Dorsolateral prefrontal cortex (tissue), 120 donors: ENCODE measurements at regions of chr11 and their contacts with region 1.

Region 1: GRCh38 chr11:27698872-27699474 is 1.3 kb downstream of the BDNF start:
- DNase-seq: peak; percentile 54 to 86 (median 68)
- H3K4me3 ChIP-seq: peak overlapping the region; percentile 29 to 77 (median 61)
- H3K27ac ChIP-seq: no peak overlapping the region
- H3K27me3 ChIP-seq: peaks cover 0 to 65% (median 25%) of the 10 kb centered on the region in 45 donors
- CTCF ChIP-seq: peak; percentile 32 to 87 (median 78)

Region 2: DNA sequence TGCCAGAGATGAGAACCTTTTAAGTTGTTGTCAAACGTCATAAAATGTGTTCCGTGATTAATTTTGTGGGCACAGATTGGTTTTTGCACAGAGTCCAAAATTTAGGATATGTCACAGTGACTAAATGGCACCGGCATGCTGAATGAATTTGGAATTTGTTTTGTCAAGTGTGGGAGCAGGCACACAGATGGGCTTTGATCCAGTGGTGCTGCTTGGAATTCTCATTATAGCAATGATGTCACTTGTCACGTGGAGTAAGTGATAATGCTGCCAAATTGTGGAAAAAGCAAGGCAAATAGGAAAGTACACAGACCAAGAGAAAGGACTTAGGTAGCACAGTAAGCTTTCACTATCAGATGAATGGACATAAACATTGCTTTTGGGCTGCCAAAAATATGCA is 184.4 kb before region 1 on chr11:
- intact Hi-C with region 1: loop called in 1 of 2 experiments (anchors 10 kb)
- DNase-seq: peak in 2 of 10 donors; percentile 18 to 41
- H3K4me3 ChIP-seq: no peak overlapping the region
- H3K27ac ChIP-seq: peak overlapping the region in 1 of 59 donors; percentile 49
- H3K27me3 ChIP-seq: no peaks in the 10 kb centered on the region
- CTCF ChIP-seq: no peak

Region 3: GRCh38 chr11:27532652-27533325 is 166.2 kb before region 1 on chr11:
- intact Hi-C with region 1: no loop called
- DNase-seq: no peak
- H3K4me3 ChIP-seq: no peak overlapping the region
- H3K27ac ChIP-seq: no peak overlapping the region
- H3K27me3 ChIP-seq: no peaks in the 10 kb centered on the region
- CTCF ChIP-seq: no peak

Region 4: DNA sequence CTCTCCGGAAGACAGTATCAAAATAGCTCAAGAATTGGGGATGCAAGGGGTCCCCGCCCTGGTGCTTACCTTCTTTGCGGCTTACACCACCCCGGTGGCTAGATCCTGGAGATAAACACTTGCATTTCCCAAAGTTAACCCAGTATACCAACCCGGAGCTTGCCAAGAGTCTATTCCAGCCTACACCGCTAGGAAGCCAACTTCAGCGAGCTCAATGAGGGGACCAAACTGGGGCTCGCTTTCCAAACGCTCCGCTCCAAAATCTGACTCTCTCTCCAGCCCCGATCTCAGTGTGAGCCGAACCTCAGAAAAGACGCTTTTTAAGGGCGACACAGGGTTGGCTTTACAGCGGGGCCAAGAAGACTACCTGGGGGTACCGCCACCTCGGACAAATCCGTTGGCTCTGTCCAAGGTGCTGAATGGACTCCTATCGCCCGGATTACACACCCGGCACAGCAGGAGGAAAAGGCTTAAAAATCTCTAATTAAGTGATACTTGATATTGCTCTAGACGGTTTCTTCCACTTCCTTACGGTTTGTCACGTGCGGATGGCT is 21.4 kb after region 1 on chr11:
- intact Hi-C with region 1: no loop called
- DNase-seq: peak in 1 of 10 donors; percentile 41
- H3K4me3 ChIP-seq: peak overlapping the region in 42 of 59 donors; percentile 13 to 73 (median 59)
- H3K27ac ChIP-seq: peak overlapping the region in 2 of 59 donors; percentile 17 to 94
- H3K27me3 ChIP-seq: peaks cover 0 to 97% (median 52%) of the 10 kb centered on the region in 45 donors
- CTCF ChIP-seq: peak in 4 of 56 donors; percentile 6 to 21 (median 12)

Region 5: GRCh38 chr11:28529540-28530410 is 830.8 kb after region 1 on chr11:
- intact Hi-C with region 1: loop called (anchors 5 to 10 kb)
- DNase-seq: no peak
- H3K4me3 ChIP-seq: no peak overlapping the region
- H3K27ac ChIP-seq: no peak overlapping the region
- H3K27me3 ChIP-seq: no peaks in the 10 kb centered on the region
- CTCF ChIP-seq: peak in 55 of 56 donors; percentile 19 to 72 (median 45)

Region 6: GRCh38 chr11:28697920-28698827 is 999.2 kb after region 1 on chr11:
- intact Hi-C with region 1: loop called (anchors 5 kb)
- DNase-seq: peak in 9 of 10 donors; percentile 31 to 67 (median 49)
- H3K4me3 ChIP-seq: no peak overlapping the region
- H3K27ac ChIP-seq: no peak overlapping the region
- H3K27me3 ChIP-seq: peaks cover 0 to 9% (median 0%) of the 10 kb centered on the region in 45 donors
- CTCF ChIP-seq: peak; percentile 48 to 86 (median 75)

Region 7: DNA sequence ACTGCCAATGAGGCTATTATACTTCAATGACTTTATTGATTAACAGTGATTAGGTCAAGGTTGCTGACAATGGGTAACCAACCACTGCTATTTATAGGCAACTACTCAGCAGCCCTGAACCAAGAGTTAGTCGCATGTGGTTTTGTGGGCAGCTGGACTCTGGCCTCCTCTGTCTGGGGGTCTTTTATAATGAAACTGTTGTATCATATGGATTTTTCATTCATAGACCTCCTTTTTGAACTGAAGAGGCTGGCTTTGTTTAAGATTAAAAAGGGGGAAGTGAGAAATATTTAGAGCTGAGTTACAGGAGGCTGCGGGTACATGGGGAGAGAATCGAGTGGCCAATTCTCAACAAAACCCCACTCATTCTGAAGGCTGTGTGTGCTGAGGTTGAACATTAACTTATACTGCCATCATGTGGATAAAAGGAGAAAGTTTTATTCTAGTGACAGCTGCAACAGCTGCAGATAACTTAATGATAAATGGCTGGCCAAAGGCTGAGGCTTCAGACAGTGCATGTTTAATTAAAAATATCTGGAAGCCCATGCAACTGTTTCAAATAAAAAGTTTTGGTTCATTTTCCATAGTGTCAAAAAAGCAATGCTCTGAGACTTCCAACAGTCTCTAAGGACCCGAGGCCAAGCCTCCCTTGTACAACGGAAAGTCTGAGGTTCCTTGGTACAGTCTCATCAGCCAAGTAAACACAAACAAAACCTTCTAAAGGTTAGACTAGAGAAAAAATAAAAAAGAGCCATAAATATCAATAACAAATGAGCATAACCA is 1635.2 kb after region 1 on chr11:
- intact Hi-C with region 1: loop called (anchors 5 kb)
- DNase-seq: no peak
- H3K4me3 ChIP-seq: no peak overlapping the region
- H3K27ac ChIP-seq: no peak overlapping the region
- H3K27me3 ChIP-seq: peaks cover 0 to 26% (median 5%) of the 10 kb centered on the region in 45 donors
- CTCF ChIP-seq: peak; percentile 18 to 72 (median 52)